ENCODE measurements at regions of chr15 and their contacts with region 1.

Region 1: DNA sequence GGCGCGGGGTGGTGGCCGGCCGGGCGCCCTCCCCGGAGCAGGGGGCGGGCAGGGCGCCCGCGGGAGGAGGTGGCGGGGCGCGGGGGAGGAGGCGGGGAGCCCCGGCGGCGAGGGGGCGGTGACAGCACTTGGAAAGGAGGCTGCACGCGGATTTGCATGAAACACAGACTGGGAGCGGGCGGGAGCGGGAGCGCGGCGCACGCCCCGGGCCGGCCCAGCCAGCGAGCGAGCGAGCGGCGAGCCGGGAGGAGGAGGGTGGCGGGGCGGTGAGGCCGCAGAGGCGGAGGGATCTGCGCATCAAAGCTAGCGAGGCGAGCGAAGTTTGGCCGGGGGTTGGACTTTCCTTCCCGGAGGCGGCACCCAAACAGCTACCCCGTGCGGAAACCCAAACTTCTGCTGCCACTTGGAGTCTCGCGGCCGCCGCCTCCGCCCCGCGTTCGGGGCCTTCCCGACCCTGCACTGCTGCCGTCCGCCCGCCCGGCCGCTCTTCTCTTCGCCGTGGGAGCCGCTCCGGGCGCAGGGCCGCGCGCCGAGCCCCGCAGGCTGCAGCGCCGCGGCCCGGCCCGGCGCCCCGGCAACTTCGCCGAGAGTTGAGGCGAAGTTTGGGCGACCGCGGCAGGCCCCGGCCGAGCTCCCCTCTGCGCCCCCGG is at the start of gene SMAD3:
- DNase-seq: peak; percentile 28 to 82 (median 58)
- ATAC-seq: peak; percentile 78
- H3K4me3 ChIP-seq: peak within 1 kb of the TSS; percentile 79
- H3K4me3 Mint-ChIP-seq: peak within 1 kb of the TSS; percentile 90 to 100 (median 94)
- H3K27ac ChIP-seq: peak within 1 kb of the TSS; percentile 68
- H3K27ac Mint-ChIP-seq: peak within 1 kb of the TSS; percentile 53 to 96 (median 91)
- H3K4me1 ChIP-seq: peaks cover 20 to 51% of the 10 kb centered on the region in 2 donors
- H3K4me1 Mint-ChIP-seq: peaks cover 37 to 67% (median 56%) of the 10 kb centered on the region in 7 donors
- H3K27me3 ChIP-seq: no peaks in the 10 kb centered on the region
- H3K27me3 Mint-ChIP-seq: peaks cover 0 to 14% (median 0%) of the 10 kb centered on the region in 5 donors
- total RNA-seq, gene SMAD3: 27.4 to 142 (median 113) TPM

Region 2: DNA sequence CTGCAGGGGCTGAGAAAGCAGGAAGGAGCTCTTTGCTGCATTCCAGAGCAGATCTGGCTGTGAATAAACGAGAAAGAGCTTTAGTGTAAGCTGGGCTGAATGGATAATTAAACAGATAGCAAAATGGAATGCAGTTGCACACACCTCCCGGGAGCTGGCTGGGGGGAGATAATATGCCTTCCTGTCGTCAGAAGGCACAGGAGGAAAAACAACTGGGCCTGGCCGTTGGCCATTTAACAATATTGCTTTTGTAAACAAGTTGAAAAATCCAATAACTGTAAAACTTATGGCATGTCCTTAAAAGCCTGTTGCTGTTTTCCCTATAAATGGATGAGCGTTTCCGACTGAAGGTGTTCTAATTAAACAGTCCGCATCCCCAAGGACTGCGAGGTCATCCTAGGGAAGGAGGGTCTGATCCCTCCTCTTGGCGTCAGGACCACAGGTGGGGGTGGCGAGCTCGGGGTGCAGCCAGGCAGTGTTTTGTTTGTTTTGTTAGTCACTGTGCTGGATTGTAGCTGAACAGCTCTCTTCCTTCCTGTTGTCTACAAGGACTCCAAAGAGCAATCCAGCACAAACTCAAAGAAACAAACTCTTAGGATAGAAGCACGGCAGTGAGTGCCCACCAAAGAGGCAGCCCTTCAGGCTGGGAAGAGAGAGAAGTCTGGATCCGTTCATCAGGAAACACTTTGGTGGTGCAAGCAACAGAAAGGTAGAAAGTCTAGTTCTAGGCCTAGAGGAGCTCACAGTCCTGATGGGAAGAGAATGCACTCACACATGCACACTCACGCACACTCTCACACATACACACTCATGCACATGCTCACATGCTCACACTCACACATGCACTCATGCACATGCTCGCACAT is 133.6 kb before region 1 on chr15:
- CTCF ChIA-PET with region 1: no interaction called
- POLR2A ChIA-PET with region 1: no interaction called
- intact Hi-C with region 1: no loop called
- DNase-seq: no peak
- ATAC-seq: no peak
- H3K4me3 ChIP-seq: no peak overlapping the region
- H3K4me3 Mint-ChIP-seq: no peak overlapping the region
- H3K27ac ChIP-seq: no peak overlapping the region
- H3K27ac Mint-ChIP-seq: no peak overlapping the region
- H3K4me1 ChIP-seq: no peaks in the 10 kb centered on the region
- H3K4me1 Mint-ChIP-seq: peaks cover 0 to 4% (median 0%) of the 10 kb centered on the region in 7 donors
- H3K27me3 ChIP-seq: no peaks in the 10 kb centered on the region
- H3K27me3 Mint-ChIP-seq: peaks cover 13 to 21% (median 17%) of the 10 kb centered on the region in 5 donors

Region 3: DNA sequence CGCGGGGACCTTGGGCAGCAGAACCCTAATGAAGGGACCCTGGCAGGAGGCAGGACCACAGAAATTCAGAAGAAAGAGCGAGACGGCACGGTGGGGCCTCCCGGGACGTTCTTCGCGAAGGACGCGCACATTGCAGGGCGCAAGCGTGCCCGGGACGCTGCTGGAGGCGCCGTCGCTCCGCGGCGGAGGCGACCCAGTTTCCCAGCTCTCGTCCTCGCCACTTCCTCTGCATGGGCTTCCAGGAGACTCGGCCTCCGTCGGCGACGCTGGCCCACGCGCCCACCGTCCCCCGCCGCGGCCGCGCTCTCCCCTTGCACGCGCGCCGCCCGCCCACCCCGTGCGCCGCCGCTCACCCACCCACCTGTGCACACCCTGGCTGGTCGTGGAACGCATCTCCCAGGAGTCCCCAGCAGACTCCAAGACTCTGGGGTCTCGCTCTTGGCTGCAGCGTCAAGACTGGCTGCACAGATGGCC is 32.0 kb before region 1 on chr15:
- CTCF ChIA-PET with region 1: no interaction called
- POLR2A ChIA-PET with region 1: interaction called, 3 read pairs
- intact Hi-C with region 1: loop called (anchors 2 to 5 kb)
- DNase-seq: peak in 6 of 9 donors; percentile 10 to 35 (median 24)
- ATAC-seq: peak; percentile 56
- H3K4me3 ChIP-seq: peak overlapping the region; percentile 41
- H3K4me3 Mint-ChIP-seq: peak overlapping the region in 6 of 10 donors; percentile 30 to 75 (median 68)
- H3K27ac ChIP-seq: no peak overlapping the region
- H3K27ac Mint-ChIP-seq: peak overlapping the region in 3 of 9 donors; percentile 20 to 41 (median 20)
- H3K4me1 ChIP-seq: peaks cover 4 to 12% of the 10 kb centered on the region in 2 donors
- H3K4me1 Mint-ChIP-seq: peaks cover 3 to 24% (median 14%) of the 10 kb centered on the region in 7 donors
- H3K27me3 ChIP-seq: no peaks in the 10 kb centered on the region
- H3K27me3 Mint-ChIP-seq: peaks cover 0 to 16% (median 0%) of the 10 kb centered on the region in 5 donors

Region 4: DNA sequence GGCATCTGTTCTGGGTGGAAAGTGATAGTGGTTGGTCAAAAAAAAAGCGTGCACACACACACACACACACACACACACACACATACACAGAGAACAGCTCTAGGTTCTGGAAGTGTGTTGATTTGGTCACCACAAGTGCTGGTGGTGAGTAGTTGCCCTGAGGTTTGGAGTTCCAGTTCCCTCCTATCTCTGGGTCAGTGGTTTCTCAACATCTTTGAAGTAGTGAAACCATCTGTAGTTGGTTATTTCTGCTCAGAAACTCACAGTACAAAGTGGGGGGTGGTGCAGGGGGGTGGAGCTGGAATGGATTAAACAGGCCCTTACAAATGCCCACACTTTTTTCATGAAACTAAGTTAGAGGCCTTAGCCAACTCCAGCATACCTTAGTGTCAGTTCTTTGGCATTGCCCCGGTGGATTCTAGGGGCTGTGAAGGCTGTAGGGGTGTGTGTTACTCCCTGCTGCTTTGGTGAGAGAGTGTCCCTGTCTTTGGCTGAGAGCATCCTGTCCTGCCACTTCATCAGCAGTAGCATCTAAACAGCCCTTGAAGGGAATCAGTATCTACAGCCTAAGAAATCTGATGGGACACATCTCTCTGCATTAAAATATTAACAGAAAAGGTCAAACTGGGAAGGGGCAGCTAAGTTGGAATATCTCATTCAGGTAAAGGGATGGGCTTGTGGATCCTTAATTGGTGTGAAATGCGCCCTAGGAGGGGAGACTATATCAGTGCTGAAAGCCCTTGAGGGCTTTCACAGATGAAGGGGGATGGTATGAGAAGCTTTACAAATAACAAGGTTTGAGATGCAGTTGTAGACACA is 20.5 kb after region 1 on chr15:
- CTCF ChIA-PET with region 1: interaction called, 22 read pairs
- POLR2A ChIA-PET with region 1: interaction called, 104 read pairs
- intact Hi-C with region 1: loop called (anchors 1 kb)
- DNase-seq: no peak
- ATAC-seq: peak; percentile 75
- H3K4me3 ChIP-seq: peak overlapping the region; percentile 14
- H3K4me3 Mint-ChIP-seq: peak overlapping the region in 9 of 10 donors; percentile 3 to 98 (median 56)
- H3K27ac ChIP-seq: no peak overlapping the region
- H3K27ac Mint-ChIP-seq: peak overlapping the region in 5 of 9 donors; percentile 67 to 95 (median 78)
- H3K4me1 ChIP-seq: peaks cover 74 to 91% of the 10 kb centered on the region in 2 donors
- H3K4me1 Mint-ChIP-seq: peaks cover 56 to 97% (median 93%) of the 10 kb centered on the region in 7 donors
- H3K27me3 ChIP-seq: no peaks in the 10 kb centered on the region
- H3K27me3 Mint-ChIP-seq: no peaks in the 10 kb centered on the region

Region 5: DNA sequence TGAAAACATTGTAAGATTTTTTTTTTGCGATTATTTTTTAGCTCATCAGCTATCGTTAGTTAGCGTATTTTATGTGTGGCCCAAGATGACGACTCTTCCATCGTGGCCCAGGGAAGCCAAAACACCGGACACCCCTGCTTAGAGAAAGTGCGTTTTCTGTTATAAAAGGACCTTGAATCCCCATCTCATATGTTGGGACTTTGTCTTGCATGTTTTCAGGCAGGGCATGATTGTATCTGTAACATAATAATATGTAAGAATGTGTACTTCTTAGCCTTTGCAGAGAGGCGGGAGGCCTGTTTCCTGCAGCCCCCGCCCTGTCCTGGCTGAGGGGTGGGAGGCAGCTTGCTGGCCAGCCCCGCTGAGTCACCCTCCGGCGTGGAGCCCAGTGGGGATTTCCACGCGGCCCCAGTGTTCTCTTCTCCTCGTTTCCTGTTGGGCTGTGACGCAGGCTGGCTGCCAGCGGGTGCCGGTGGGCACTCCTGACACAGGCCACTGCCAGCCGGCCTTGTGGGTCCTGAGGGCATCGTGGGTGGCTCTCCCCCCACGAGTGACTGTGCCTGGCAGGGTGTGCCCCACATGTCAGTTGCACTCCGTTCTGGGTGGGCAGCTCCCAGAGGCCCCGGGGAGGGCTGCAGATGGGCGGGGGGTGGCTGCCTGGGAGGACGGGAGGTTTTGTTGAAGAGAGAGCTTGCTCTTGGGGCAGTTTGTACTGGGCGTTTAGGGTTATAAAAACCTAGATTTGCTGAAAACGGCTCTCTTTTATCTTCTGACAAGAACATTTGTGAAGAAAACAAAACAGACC is 55.5 kb after region 1 on chr15:
- CTCF ChIA-PET with region 1: interaction called, 3 read pairs
- POLR2A ChIA-PET with region 1: interaction called, 10 read pairs
- intact Hi-C with region 1: loop called in 1 of 2 experiments (anchors 1 kb)
- DNase-seq: peak; percentile 54 to 90 (median 71)
- ATAC-seq: peak; percentile 93
- H3K4me3 ChIP-seq: peak overlapping the region; percentile 48
- H3K4me3 Mint-ChIP-seq: peak overlapping the region; percentile 78 to 90 (median 84)
- H3K27ac ChIP-seq: peak overlapping the region; percentile 78
- H3K27ac Mint-ChIP-seq: peak overlapping the region; percentile 88 to 97 (median 95)
- H3K4me1 ChIP-seq: peaks cover 58 to 66% of the 10 kb centered on the region in 2 donors
- H3K4me1 Mint-ChIP-seq: peaks cover 53 to 95% (median 82%) of the 10 kb centered on the region in 7 donors
- H3K27me3 ChIP-seq: no peaks in the 10 kb centered on the region
- H3K27me3 Mint-ChIP-seq: no peaks in the 10 kb centered on the region

Region 6: GRCh38 chr15:67181191-67181645 is 115.6 kb after region 1 on chr15:
- CTCF ChIA-PET with region 1: no interaction called
- POLR2A ChIA-PET with region 1: no interaction called
- intact Hi-C with region 1: loop called in 1 of 2 experiments (anchors 5 kb)
- DNase-seq: peak in 4 of 9 donors; percentile 7 to 17 (median 11)
- ATAC-seq: no peak
- H3K4me3 ChIP-seq: no peak overlapping the region
- H3K4me3 Mint-ChIP-seq: no peak overlapping the region
- H3K27ac ChIP-seq: no peak overlapping the region
- H3K27ac Mint-ChIP-seq: no peak overlapping the region
- H3K4me1 ChIP-seq: no peaks in the 10 kb centered on the region
- H3K4me1 Mint-ChIP-seq: peaks cover 0 to 23% (median 8%) of the 10 kb centered on the region in 7 donors
- H3K27me3 ChIP-seq: no peaks in the 10 kb centered on the region
- H3K27me3 Mint-ChIP-seq: no peaks in the 10 kb centered on the region

Region 7: GRCh38 chr15:68025835-68026424 is 960.4 kb after region 1 on chr15:
- CTCF ChIA-PET with region 1: no interaction called
- POLR2A ChIA-PET with region 1: no interaction called
- intact Hi-C with region 1: no loop called
- DNase-seq: no peak
- ATAC-seq: no peak
- H3K4me3 ChIP-seq: no peak overlapping the region
- H3K4me3 Mint-ChIP-seq: no peak overlapping the region
- H3K27ac ChIP-seq: no peak overlapping the region
- H3K27ac Mint-ChIP-seq: no peak overlapping the region
- H3K4me1 ChIP-seq: no peaks in the 10 kb centered on the region
- H3K4me1 Mint-ChIP-seq: no peaks in the 10 kb centered on the region
- H3K27me3 ChIP-seq: no peaks in the 10 kb centered on the region
- H3K27me3 Mint-ChIP-seq: peaks cover 0 to 7% (median 0%) of the 10 kb centered on the region in 5 donors